GM10248 (cell line): ENCODE measurements at regions of chr10 and their contacts with region 1.

Region 1: GRCh38 chr10:63629363-63630084 is 108.3 kb downstream of the REEP3 start:
- DNase-seq: peak; percentile 73
- CTCF ChIP-seq: peak; percentile 87

Region 2: DNA sequence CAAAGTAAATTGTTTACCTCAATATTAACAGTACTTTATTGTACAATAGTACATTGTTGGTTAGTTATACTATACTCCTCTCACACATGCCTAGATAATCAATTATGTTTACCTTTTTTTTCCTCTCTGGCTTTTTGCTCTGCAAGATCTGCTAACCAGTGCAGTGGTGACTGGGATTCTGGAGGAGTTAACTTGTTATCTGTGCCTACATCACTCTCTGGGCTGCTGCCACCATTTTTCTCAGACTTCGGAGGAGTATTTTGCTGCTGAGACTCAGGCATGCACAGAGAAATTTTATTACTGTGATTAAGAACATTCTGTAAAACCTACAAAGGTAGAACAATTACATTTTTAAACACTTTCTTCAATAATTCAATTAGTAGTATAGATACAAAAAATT is 436.7 kb before region 1 on chr10:
- CTCF ChIA-PET with region 1: interaction called, 17 read pairs
- POLR2A ChIA-PET with region 1: no interaction called
- DNase-seq: no peak
- CTCF ChIP-seq: no peak

Region 3: GRCh38 chr10:63217120-63217605 is 412.4 kb before region 1 on chr10:
- CTCF ChIA-PET with region 1: interaction called, 36 read pairs
- POLR2A ChIA-PET with region 1: no interaction called
- DNase-seq: peak; percentile 37
- CTCF ChIP-seq: peak; percentile 51

Region 4: DNA sequence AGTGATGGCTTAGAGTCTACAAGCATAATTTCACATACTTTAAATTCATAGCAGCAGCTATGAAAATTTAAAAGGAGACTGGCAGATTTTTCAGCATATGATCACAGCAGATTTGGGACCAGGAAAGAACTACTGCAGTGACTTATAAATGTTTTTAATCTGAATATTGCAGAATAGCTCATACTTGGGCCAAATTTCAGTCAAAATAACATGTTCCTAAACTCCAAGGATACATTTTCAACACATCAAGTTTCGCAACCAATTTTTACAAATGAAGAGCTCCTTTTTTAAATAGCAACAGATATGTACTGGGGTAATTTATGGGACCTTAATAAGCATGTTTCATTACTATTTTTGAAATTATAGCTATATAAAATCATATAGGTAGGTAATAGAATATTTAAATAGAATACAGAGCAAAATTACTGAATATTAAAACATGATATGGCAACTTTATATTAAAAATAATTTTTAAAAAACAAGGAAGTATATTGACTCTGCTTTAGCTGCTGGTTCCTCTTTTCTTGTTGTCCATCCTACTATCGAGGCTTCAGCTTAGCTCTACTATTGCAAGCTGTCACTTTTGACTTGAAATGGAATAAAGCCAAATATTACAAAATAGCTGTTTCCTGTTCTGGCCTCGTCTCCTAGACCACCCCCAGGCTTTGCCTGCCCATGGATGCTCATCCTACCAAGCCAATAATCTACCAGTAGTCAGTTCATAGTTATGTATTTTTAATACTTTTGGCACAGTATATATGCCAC is 373.3 kb before region 1 on chr10:
- CTCF ChIA-PET with region 1: interaction called, 11 read pairs
- POLR2A ChIA-PET with region 1: no interaction called
- DNase-seq: no peak
- CTCF ChIP-seq: no peak

Region 5: GRCh38 chr10:63614371-63614891 is 15.1 kb before region 1 on chr10:
- CTCF ChIA-PET with region 1: interaction called, 43 read pairs
- POLR2A ChIA-PET with region 1: no interaction called
- DNase-seq: no peak
- CTCF ChIP-seq: no peak